ENCODE measurements at regions of chr11 and their contacts with region 1.

Region 1: DNA sequence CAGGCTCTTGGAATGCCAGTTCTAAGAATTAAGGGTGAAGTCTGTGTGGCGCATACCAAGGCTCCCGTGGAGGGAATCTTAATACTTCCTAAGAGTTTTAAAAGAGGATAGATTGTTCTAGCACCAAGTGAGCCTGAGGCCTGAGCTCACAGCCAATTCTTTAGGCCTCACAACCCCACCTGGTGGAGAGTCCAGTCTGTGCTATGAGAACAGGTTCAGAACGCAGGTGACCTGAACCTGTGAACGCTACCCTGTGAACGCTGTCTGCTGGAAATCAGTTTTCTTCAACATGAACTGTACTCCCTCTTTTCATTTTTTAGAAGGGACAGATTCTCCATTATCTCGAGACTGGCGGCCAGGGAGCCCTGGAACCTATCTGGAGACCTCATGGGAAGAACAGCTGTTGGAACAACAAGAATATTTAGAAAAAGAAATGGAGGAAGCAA is 43.2 kb upstream of the DLAT start:
- DNase-seq: peak; percentile 5
- ATAC-seq: peak; percentile 96
- H3K4me3 ChIP-seq: no peak overlapping the region
- H3K27ac ChIP-seq: no peak overlapping the region
- H3K4me1 ChIP-seq: peaks cover 4% of the 10 kb centered on the region
- H3K27me3 ChIP-seq: peaks cover 3 to 8% of the 10 kb centered on the region in 2 experiments; a peak in 2 of 4 replicates
- CTCF ChIP-seq: peak; percentile 70 to 78 (median 74)
- EP300 ChIP-seq: no peak
- POLR2A ChIP-seq: no peak
- RAD21 ChIP-seq: peak; percentile 79

Region 2: DNA sequence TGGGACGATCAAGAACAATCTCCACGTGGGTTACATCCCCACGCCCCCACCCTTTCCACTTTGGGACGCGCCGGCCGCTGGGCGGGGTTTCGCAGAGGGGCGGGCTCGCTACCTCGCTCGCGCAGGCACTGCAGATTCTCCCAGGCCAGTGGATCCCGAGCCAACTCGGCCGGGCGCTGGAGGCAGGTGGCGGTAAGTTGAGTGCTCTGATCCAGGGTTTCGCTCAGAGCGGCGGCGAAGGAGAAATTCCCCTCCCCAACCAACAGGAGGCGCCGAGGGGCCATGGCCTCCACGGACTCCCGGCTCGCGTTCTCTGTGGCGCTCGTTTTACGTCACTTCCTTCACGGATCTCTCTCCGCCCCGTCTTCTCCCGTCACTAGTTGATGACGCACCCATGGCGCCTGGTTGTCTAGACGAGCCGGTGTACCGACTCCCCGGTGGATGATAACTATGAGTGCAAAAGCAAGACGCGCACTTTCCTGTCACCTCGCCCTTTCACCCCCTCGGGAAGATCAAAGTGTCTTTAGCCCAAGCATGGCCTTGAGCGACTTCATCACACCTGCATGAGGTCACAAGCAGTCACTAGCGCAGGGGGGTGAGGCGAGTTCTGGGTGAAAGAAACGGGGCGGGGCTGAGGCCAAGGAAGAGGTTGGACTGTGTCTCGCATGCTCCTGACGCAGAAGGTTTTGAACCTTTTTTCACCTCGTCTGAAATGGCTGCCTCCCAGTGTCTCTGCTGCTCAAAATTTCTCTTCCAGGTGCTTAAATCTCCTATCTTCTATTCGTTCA is 103.0 kb before region 1 on chr11 and contains the starts of genes CFAP68 and FDXACB1:
- CTCF ChIA-PET with region 1: interaction called, 11 read pairs
- POLR2A ChIA-PET with region 1: no interaction called
- RAD21 ChIA-PET with region 1: no interaction called
- SMC1A ChIA-PET with region 1: no interaction called
- in situ Hi-C with region 1: no loop called
- intact Hi-C with region 1: loop called (anchors 5 kb)
- DNase-seq: peak; percentile 93
- ATAC-seq: peak; percentile 94
- H3K4me3 ChIP-seq: peak within 1 kb of the TSS; percentile 94
- H3K27ac ChIP-seq: peak within 1 kb of the TSS; percentile 85
- H3K4me1 ChIP-seq: no peaks in the 10 kb centered on the region
- H3K27me3 ChIP-seq: no peaks in the 10 kb centered on the region
- CTCF ChIP-seq: peak; percentile 96 to 97 (median 97); a peak in 5 of 6 replicates
- EP300 ChIP-seq: peak in 1 of 2 experiments; percentile 63; a peak in 2 of 4 replicates
- POLR2A ChIP-seq: peak; percentile 85
- RAD21 ChIP-seq: peak; percentile 59
- polyA plus RNA-seq, gene CFAP68: 72.7 to 83.7 TPM
- polyA plus RNA-seq, gene FDXACB1: 8.6 to 13.3 TPM

Region 3: GRCh38 chr11:111932611-111932950 is 49.5 kb before region 1 on chr11:
- CTCF ChIA-PET with region 1: interaction called, 180 read pairs
- POLR2A ChIA-PET with region 1: interaction called, 5 read pairs
- RAD21 ChIA-PET with region 1: interaction called, 109 read pairs
- SMC1A ChIA-PET with region 1: interaction called, 45 read pairs
- in situ Hi-C with region 1: no loop called
- intact Hi-C with region 1: loop called (anchors 2 kb)
- DNase-seq: no peak
- ATAC-seq: no peak
- H3K4me3 ChIP-seq: no peak overlapping the region
- H3K27ac ChIP-seq: no peak overlapping the region
- H3K4me1 ChIP-seq: peaks cover 9% of the 10 kb centered on the region
- H3K27me3 ChIP-seq: 0 out of 4 replicates have a peak, but pooled peaks cover 0 to under 1% of the 10 kb centered on the region in 2 experiments
- CTCF ChIP-seq: no peak
- EP300 ChIP-seq: no peak
- POLR2A ChIP-seq: no peak
- RAD21 ChIP-seq: no peak

Region 4: DNA sequence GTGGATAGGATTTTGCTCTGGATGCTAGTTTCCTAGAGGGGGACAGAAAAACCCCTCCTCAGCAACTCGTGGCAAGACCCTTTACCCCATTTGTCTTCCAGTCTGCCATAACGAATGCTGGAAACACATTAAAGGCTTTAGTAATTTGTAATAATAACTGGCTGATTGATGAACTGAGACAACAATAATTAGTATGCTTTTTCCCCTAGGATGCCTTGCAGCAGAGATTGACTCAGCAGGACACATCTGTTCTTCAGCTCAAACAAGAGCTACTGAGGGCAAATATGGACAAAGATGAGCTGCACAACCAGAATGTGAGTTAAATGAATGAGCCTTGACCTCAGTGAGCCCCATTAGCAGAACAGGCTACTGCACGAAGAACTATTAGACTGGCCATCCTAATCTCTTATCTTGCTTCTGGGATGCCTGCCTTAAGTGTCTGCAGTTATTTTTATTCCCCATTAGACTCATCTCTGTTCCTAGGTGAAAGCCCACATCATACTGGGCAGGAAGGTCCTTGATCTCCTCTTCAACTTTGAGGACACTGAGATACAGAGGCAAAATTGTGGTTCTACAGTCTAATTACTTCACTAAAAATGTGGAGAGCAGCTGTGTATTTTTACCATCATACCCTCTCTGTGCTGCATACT is 10.3 kb after region 1 on chr11:
- CTCF ChIA-PET with region 1: interaction called, 11 read pairs
- POLR2A ChIA-PET with region 1: no interaction called
- RAD21 ChIA-PET with region 1: interaction called, 7 read pairs
- SMC1A ChIA-PET with region 1: interaction called, 8 read pairs
- in situ Hi-C with region 1: no loop called
- intact Hi-C with region 1: no loop called
- DNase-seq: no peak
- ATAC-seq: no peak
- H3K4me3 ChIP-seq: no peak overlapping the region
- H3K27ac ChIP-seq: no peak overlapping the region
- H3K4me1 ChIP-seq: no peaks in the 10 kb centered on the region
- H3K27me3 ChIP-seq: no peaks in the 10 kb centered on the region
- CTCF ChIP-seq: no peak
- EP300 ChIP-seq: no peak
- POLR2A ChIP-seq: no peak
- RAD21 ChIP-seq: no peak